CD8-positive, alpha-beta T cell (primary cell): ENCODE measurements at regions of chr13 and their contacts with region 1.

Region 1: GRCh38 chr13:41960639-41961465 is at the start of gene VWA8:
- DNase-seq: peak; percentile 71 to 93 (median 83)
- ATAC-seq: peak; percentile 95
- H3K4me3 ChIP-seq: peak within 1 kb of the TSS; percentile 63 to 67
- H3K4me3 Mint-ChIP-seq: peak within 1 kb of the TSS; percentile 93
- H3K27ac ChIP-seq: peak within 1 kb of the TSS; percentile 59 to 78
- H3K27ac Mint-ChIP-seq: peak within 1 kb of the TSS; percentile 97
- H3K4me1 ChIP-seq: peaks cover 31% of the 10 kb centered on the region
- H3K4me1 Mint-ChIP-seq: peaks cover 41% of the 10 kb centered on the region
- H3K27me3 ChIP-seq: peaks cover 0 to 3% of the 10 kb centered on the region in 2 experiments
- H3K27me3 Mint-ChIP-seq: peaks cover 2% of the 10 kb centered on the region
- CTCF ChIP-seq: no peak
- total RNA-seq, gene VWA8: 16.3 to 16.5 TPM

Region 2: DNA sequence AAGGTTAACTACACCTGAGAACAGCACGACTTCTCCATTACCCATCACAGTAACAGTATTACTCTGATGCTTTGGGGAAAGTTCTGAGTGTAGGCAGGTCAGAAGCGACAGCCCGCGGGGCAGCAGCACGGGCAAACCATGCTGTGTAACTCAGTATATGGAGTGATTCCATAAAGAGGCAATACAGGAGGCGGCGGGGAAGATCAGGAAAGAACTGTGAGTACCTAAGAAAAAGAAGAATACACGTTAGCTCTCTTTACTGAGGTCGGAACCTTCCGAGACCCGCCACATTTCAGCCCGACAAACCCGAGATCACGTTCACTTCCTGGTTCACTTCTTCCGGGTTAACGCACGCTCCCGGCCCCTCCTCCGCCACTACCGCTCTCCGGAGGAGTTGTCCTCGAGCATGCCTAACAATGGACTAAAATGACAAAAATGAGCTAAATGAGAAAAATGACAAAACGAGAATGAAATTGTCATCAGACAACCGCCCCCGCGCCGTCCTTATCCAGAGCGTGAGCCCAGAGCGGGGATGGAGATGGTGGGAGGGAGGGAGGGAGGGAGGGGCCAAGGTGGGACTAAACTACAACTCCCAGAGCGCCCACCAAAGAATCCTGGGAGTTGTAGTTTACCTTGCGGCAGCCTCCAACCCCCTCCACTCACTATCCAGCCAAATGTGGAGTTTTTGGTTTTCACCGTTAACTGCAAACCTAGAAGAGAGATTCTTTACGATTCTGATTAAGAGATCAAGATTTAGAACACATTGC is 697.4 kb before region 1 on chr13 and contains the start of gene MTRF1:
- CTCF ChIA-PET with region 1: no interaction called
- POLR2A ChIA-PET with region 1: no interaction called
- intact Hi-C with region 1: loop called (anchors 1 to 2 kb)
- DNase-seq: peak; percentile 65 to 91 (median 82)
- ATAC-seq: peak; percentile 90
- H3K4me3 ChIP-seq: peak within 1 kb of the TSS; percentile 68 to 72
- H3K4me3 Mint-ChIP-seq: peak within 1 kb of the TSS; percentile 99
- H3K27ac ChIP-seq: peak within 1 kb of the TSS; percentile 73 to 84
- H3K27ac Mint-ChIP-seq: peak within 1 kb of the TSS; percentile 99
- H3K4me1 ChIP-seq: peaks cover 26% of the 10 kb centered on the region
- H3K4me1 Mint-ChIP-seq: peaks cover 40% of the 10 kb centered on the region
- H3K27me3 ChIP-seq: no peaks in the 10 kb centered on the region
- H3K27me3 Mint-ChIP-seq: no peaks in the 10 kb centered on the region
- CTCF ChIP-seq: no peak
- total RNA-seq, gene MTRF1: 26.2 to 26.9 TPM

Region 3: DNA sequence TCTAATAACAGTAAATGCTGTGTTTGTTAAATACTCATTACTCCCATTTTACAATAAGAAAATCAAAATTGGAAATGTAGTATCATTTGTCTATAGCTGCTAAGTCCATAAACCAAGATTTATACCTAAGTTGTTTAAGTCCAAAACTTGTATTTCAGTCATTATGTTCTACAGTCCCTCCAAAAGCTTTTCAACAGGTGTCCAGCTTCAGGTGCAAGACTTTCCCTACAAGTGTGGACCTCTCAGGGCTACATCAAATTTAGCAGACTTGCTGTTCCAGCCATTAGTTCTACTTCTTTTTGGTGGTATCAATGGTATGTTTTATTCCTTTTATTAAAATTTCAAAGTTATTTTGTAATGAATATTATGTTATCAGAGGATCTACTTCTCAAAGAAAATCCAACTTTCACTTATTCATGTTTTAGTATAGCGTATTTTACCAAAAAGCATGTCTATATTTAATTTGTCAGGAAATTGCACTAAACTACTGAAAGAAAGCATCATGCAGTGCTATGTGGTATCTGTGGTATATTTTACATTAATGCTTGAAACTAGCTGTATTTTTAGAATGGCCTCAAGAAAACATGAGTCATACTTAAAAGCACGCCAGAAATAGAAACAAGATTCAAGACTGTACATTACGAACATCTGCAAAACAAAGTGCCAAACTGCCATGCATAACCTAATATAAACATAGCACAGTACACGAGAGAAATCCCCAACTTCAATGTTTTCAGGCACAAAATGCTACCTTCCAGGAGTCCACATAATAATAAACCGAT is 44.5 kb before region 1 on chr13:
- CTCF ChIA-PET with region 1: no interaction called
- POLR2A ChIA-PET with region 1: interaction called, 3 read pairs
- intact Hi-C with region 1: loop called (anchors 2 kb)
- DNase-seq: peak in 2 of 9 experiments; percentile 33 to 59
- ATAC-seq: peak; percentile 65
- H3K4me3 ChIP-seq: no peak overlapping the region
- H3K4me3 Mint-ChIP-seq: peak overlapping the region; percentile 26
- H3K27ac ChIP-seq: peak overlapping the region in 1 of 2 experiments; percentile 31
- H3K27ac Mint-ChIP-seq: peak overlapping the region; percentile 42
- H3K4me1 ChIP-seq: peaks cover 24% of the 10 kb centered on the region
- H3K4me1 Mint-ChIP-seq: peaks cover 47% of the 10 kb centered on the region
- H3K27me3 ChIP-seq: no peaks in the 10 kb centered on the region
- H3K27me3 Mint-ChIP-seq: no peaks in the 10 kb centered on the region
- CTCF ChIP-seq: no peak

Region 4: GRCh38 chr13:42039946-42040729 is 79.3 kb after region 1 on chr13:
- CTCF ChIA-PET with region 1: no interaction called
- POLR2A ChIA-PET with region 1: no interaction called
- intact Hi-C with region 1: loop called (anchors 1 to 2 kb)
- DNase-seq: peak; percentile 70 to 94 (median 88)
- ATAC-seq: peak; percentile 81
- H3K4me3 ChIP-seq: peak overlapping the region; percentile 47 to 88
- H3K4me3 Mint-ChIP-seq: peak overlapping the region; percentile 91
- H3K27ac ChIP-seq: peak overlapping the region; percentile 23 to 72
- H3K27ac Mint-ChIP-seq: peak overlapping the region; percentile 72
- H3K4me1 ChIP-seq: peaks cover 9% of the 10 kb centered on the region
- H3K4me1 Mint-ChIP-seq: peaks cover 16% of the 10 kb centered on the region
- H3K27me3 ChIP-seq: no peaks in the 10 kb centered on the region
- H3K27me3 Mint-ChIP-seq: no peaks in the 10 kb centered on the region
- CTCF ChIP-seq: no peak

Region 5: GRCh38 chr13:42048682-42049453 is 88.0 kb after region 1 on chr13:
- CTCF ChIA-PET with region 1: interaction called, 3 read pairs
- POLR2A ChIA-PET with region 1: interaction called, 4 read pairs
- intact Hi-C with region 1: loop called in 1 of 2 experiments (anchors 2 kb)
- DNase-seq: peak; percentile 23 to 74 (median 60)
- ATAC-seq: peak; percentile 70
- H3K4me3 ChIP-seq: peak overlapping the region; percentile 80 to 83
- H3K4me3 Mint-ChIP-seq: peak overlapping the region; percentile 86
- H3K27ac ChIP-seq: peak overlapping the region in 1 of 2 experiments; percentile 20
- H3K27ac Mint-ChIP-seq: peak overlapping the region; percentile 60
- H3K4me1 ChIP-seq: peaks cover 10% of the 10 kb centered on the region
- H3K4me1 Mint-ChIP-seq: peaks cover 12% of the 10 kb centered on the region
- H3K27me3 ChIP-seq: no peaks in the 10 kb centered on the region
- H3K27me3 Mint-ChIP-seq: no peaks in the 10 kb centered on the region
- CTCF ChIP-seq: no peak

Region 6: DNA sequence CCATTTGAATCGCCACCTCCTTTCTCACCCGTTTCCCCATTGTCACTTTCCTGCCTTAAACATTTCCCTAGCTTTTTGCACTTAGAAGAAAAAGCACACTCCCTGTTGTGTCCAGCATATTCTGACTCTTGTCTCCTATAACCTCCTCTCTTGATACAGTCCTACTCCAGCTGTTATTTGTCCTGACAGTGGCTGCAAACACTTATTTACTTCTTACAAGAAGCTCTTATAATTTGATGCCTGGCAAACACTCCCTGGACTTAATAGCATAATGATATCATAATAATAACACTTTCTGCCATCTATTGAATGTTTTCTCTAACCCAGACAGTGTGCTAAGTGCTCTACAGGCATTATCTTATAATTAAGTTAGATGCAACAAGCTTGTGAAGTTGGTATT is 164.2 kb after region 1 on chr13:
- CTCF ChIA-PET with region 1: no interaction called
- POLR2A ChIA-PET with region 1: no interaction called
- intact Hi-C with region 1: no loop called
- DNase-seq: no peak
- ATAC-seq: no peak
- H3K4me3 ChIP-seq: no peak overlapping the region
- H3K4me3 Mint-ChIP-seq: no peak overlapping the region
- H3K27ac ChIP-seq: no peak overlapping the region
- H3K27ac Mint-ChIP-seq: no peak overlapping the region
- H3K4me1 ChIP-seq: no peaks in the 10 kb centered on the region
- H3K4me1 Mint-ChIP-seq: no peaks in the 10 kb centered on the region
- H3K27me3 ChIP-seq: no peaks in the 10 kb centered on the region
- H3K27me3 Mint-ChIP-seq: no peaks in the 10 kb centered on the region
- CTCF ChIP-seq: no peak

Region 7: GRCh38 chr13:43206838-43207237 is 1246.0 kb after region 1 on chr13:
- CTCF ChIA-PET with region 1: no interaction called
- POLR2A ChIA-PET with region 1: no interaction called
- intact Hi-C with region 1: no loop called
- DNase-seq: no peak
- ATAC-seq: no peak
- H3K4me3 ChIP-seq: no peak overlapping the region
- H3K4me3 Mint-ChIP-seq: no peak overlapping the region
- H3K27ac ChIP-seq: no peak overlapping the region
- H3K27ac Mint-ChIP-seq: no peak overlapping the region
- H3K4me1 ChIP-seq: no peaks in the 10 kb centered on the region
- H3K4me1 Mint-ChIP-seq: no peaks in the 10 kb centered on the region
- H3K27me3 ChIP-seq: no peaks in the 10 kb centered on the region
- H3K27me3 Mint-ChIP-seq: peaks cover 3% of the 10 kb centered on the region
- CTCF ChIP-seq: no peak